Activated B cell treated with CpG ODN at 0.5 μM for 24 hours (primary cell): ENCODE measurements at regions of chr7 and their contacts with region 1.

Region 1: GRCh38 chr7:120805636-120806388 is 52.1 kb downstream of the TSPAN12 start:
- DNase-seq: no peak
- ATAC-seq: peak; percentile 69
- H3K4me3 Mint-ChIP-seq: no peak overlapping the region
- H3K27ac Mint-ChIP-seq: no peak overlapping the region
- H3K4me1 Mint-ChIP-seq: no peaks in the 10 kb centered on the region
- H3K27me3 Mint-ChIP-seq: peaks cover 7% of the 10 kb centered on the region
- CTCF ChIP-seq: peak; percentile 63

Region 2: GRCh38 chr7:120792091-120792860 is 13.5 kb before region 1 on chr7:
- CTCF ChIA-PET with region 1: interaction called, 17 read pairs
- POLR2A ChIA-PET with region 1: no interaction called
- intact Hi-C with region 1: no loop called
- DNase-seq: peak; percentile 50
- ATAC-seq: peak; percentile 73
- H3K4me3 Mint-ChIP-seq: no peak overlapping the region
- H3K27ac Mint-ChIP-seq: no peak overlapping the region
- H3K4me1 Mint-ChIP-seq: no peaks in the 10 kb centered on the region
- H3K27me3 Mint-ChIP-seq: peaks cover 2% of the 10 kb centered on the region
- CTCF ChIP-seq: peak; percentile 74

Region 3: DNA sequence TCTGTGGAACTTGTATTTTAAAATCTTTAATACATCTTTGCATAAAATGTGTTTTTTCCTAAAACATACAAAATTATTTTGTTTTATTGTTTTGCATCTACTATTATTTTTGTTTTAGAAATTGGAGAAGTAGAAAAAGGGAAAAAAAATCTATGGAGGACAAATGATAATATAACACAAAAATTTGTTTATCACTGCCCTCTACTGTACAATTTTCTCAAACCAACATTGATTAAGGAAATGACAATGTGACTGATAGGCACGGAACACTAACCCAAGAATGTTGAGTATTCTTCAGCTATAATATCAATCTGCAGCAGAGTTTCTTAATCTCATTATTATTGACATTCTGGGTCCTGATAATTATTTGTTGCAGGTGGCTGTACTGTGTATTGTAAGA is 135.3 kb after region 1 on chr7:
- CTCF ChIA-PET with region 1: no interaction called
- POLR2A ChIA-PET with region 1: no interaction called
- intact Hi-C with region 1: loop called (anchors 1 kb)
- DNase-seq: no peak
- ATAC-seq: no peak
- H3K4me3 Mint-ChIP-seq: no peak overlapping the region
- H3K27ac Mint-ChIP-seq: no peak overlapping the region
- H3K4me1 Mint-ChIP-seq: no peaks in the 10 kb centered on the region
- H3K27me3 Mint-ChIP-seq: no peaks in the 10 kb centered on the region
- CTCF ChIP-seq: no peak

Region 4: DNA sequence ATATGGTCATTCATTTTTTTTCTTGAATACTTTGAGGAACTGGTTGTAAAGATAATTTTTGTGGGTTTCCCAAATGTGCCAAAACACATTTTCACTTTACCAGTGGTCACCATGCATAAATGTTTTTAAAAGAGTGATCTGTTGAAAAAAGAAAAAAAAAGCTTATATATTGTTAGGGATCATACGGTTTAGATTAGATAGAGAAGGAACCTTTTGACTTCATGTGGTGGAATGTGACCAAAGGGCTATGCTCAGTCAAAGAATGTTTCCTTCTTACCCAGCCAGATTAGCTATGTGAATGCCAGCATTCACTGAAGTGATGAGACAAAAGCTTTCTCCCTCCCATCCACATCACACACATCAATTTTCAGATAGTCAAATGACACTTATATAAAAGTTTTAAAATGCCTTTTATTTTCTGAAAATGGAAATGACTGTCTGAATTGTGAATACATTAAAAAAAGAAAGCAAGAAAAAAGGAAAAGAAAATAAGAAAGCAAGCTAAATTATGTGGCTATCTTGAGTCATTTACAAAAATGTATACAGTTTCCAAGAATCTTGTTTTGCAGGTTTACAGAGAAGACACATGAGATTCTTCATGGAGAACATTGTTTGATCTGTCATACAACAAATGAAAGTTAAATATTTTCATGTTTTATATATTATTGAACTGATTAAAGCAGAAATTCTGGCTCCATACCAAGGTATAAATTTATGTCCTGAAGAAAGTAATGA is 174.1 kb after region 1 on chr7:
- CTCF ChIA-PET with region 1: no interaction called
- POLR2A ChIA-PET with region 1: no interaction called
- intact Hi-C with region 1: no loop called
- DNase-seq: no peak
- ATAC-seq: no peak
- H3K4me3 Mint-ChIP-seq: no peak overlapping the region
- H3K27ac Mint-ChIP-seq: no peak overlapping the region
- H3K4me1 Mint-ChIP-seq: no peaks in the 10 kb centered on the region
- H3K27me3 Mint-ChIP-seq: peaks cover 4% of the 10 kb centered on the region
- CTCF ChIP-seq: no peak

Region 5: DNA sequence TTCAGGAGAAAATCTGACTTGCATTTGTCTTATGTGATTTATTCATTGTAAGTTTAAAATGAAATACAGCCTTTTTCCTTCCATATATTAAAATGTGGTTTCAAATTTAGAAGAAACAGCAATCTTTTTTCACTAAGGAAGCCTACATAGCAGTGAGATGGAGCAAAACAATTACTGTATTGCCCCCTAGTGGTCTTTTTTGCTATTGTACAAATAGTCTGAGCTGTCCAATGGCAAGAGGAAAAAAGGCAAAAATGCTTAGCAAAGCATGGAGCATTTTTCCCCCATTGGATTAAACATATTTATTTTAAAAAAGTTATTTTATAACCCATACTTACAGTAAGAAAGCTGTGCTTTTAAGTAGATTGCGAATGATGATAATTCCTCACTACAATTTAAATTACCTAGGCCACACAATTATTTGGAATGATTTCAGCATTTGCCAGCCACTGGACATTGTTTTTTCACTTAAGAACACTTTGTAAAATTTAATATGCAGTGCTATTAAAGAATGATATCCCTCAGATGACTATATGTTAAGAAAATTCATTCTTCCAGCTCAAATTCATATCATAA is 302.2 kb after region 1 on chr7:
- CTCF ChIA-PET with region 1: interaction called, 9 read pairs
- POLR2A ChIA-PET with region 1: no interaction called
- intact Hi-C with region 1: loop called (anchors 1 kb)
- DNase-seq: no peak
- ATAC-seq: peak; percentile 77
- H3K4me3 Mint-ChIP-seq: no peak overlapping the region
- H3K27ac Mint-ChIP-seq: no peak overlapping the region
- H3K4me1 Mint-ChIP-seq: no peaks in the 10 kb centered on the region
- H3K27me3 Mint-ChIP-seq: no peaks in the 10 kb centered on the region
- CTCF ChIP-seq: peak; percentile 83

Region 6: GRCh38 chr7:121204537-121204936 is 398.7 kb after region 1 on chr7:
- CTCF ChIA-PET with region 1: no interaction called
- POLR2A ChIA-PET with region 1: no interaction called
- intact Hi-C with region 1: no loop called
- DNase-seq: no peak
- ATAC-seq: no peak
- H3K4me3 Mint-ChIP-seq: no peak overlapping the region
- H3K27ac Mint-ChIP-seq: no peak overlapping the region
- H3K4me1 Mint-ChIP-seq: peaks cover 42% of the 10 kb centered on the region
- H3K27me3 Mint-ChIP-seq: no peaks in the 10 kb centered on the region
- CTCF ChIP-seq: no peak

Region 7: GRCh38 chr7:121994625-121995410 is 1189.0 kb after region 1 on chr7:
- CTCF ChIA-PET with region 1: interaction called, 7 read pairs
- POLR2A ChIA-PET with region 1: no interaction called
- intact Hi-C with region 1: loop called (anchors 2 kb)
- DNase-seq: no peak
- ATAC-seq: peak; percentile 86
- H3K4me3 Mint-ChIP-seq: no peak overlapping the region
- H3K27ac Mint-ChIP-seq: no peak overlapping the region
- H3K4me1 Mint-ChIP-seq: no peaks in the 10 kb centered on the region
- H3K27me3 Mint-ChIP-seq: peaks cover 2% of the 10 kb centered on the region
- CTCF ChIP-seq: peak; percentile 83